CD4-positive, alpha-beta memory T cell (primary cell): ENCODE measurements at regions of chr15 and their contacts with region 1.

Region 1: GRCh38 chr15:75647370-75648155 is at the start of gene SNX33:
- DNase-seq: peak; percentile 43 to 82 (median 49)
- H3K4me3 ChIP-seq: peak within 1 kb of the TSS; percentile 64 to 73
- H3K4me3 Mint-ChIP-seq: peak within 1 kb of the TSS; percentile 86 to 91 (median 89)
- H3K27ac ChIP-seq: peak within 1 kb of the TSS; percentile 45
- H3K27ac Mint-ChIP-seq: peak within 1 kb of the TSS; percentile 66 to 91 (median 86)
- H3K4me1 ChIP-seq: peaks cover 32% of the 10 kb centered on the region
- H3K4me1 Mint-ChIP-seq: peaks cover 20 to 53% (median 37%) of the 10 kb centered on the region in 4 donors
- H3K27me3 ChIP-seq: no peaks in the 10 kb centered on the region
- H3K27me3 Mint-ChIP-seq: no peaks in the 10 kb centered on the region
- total RNA-seq, gene SNX33: 3.5 to 3.8 TPM

Region 2: DNA sequence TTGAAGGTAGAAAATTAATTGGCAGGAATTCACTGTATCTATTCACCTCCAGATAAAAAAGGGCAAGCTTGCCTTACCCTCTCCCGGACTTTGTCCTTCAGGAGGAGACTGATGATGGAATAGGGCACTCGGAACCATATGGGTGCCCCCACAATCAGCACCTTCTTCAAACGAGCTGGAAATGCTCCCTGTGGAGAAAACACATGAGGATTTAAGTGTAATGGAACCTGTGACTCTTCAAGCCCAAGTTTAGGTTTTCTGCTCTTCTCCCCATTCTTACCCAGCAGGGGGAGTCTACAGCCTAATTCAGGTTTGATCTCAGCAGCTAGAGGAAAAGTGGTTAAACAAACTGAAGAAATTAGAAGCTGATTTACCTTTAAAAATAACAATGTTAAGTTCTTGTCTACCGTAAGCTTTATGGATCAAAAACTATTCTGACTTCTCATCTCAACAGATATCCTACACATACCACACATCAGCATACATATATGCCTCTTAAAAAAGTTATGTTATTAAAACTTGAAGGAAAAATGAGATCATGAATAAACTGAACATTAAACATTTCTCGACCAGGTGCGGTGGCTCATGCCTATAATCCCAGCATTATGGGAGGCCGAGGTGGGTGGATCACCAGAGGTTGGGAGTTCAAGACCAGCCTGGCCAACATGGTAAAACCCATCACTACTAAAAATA is 138.6 kb before region 1 on chr15:
- CTCF ChIA-PET with region 1: interaction called, 41 read pairs
- POLR2A ChIA-PET with region 1: interaction called, 20 read pairs
- intact Hi-C with region 1: loop called (anchors 2 kb)
- DNase-seq: peak in 4 of 5 donors; percentile 40 to 49 (median 44)
- H3K4me3 ChIP-seq: no peak overlapping the region
- H3K4me3 Mint-ChIP-seq: no peak overlapping the region
- H3K27ac ChIP-seq: no peak overlapping the region
- H3K27ac Mint-ChIP-seq: peak overlapping the region in 2 of 7 donors; percentile 50 to 78
- H3K4me1 ChIP-seq: no peaks in the 10 kb centered on the region
- H3K4me1 Mint-ChIP-seq: peaks cover 0 to 3% (median 0%) of the 10 kb centered on the region in 4 donors
- H3K27me3 ChIP-seq: no peaks in the 10 kb centered on the region
- H3K27me3 Mint-ChIP-seq: no peaks in the 10 kb centered on the region

Region 3: GRCh38 chr15:75606711-75607699 is 40.6 kb before region 1 on chr15:
- CTCF ChIA-PET with region 1: interaction called, 3 read pairs
- POLR2A ChIA-PET with region 1: interaction called, 56 read pairs
- intact Hi-C with region 1: no loop called
- DNase-seq: peak; percentile 43 to 57 (median 52)
- H3K4me3 ChIP-seq: peak overlapping the region; percentile 5 to 40
- H3K4me3 Mint-ChIP-seq: peak overlapping the region; percentile 71 to 82 (median 78)
- H3K27ac ChIP-seq: peak overlapping the region; percentile 39
- H3K27ac Mint-ChIP-seq: peak overlapping the region; percentile 78 to 94 (median 91)
- H3K4me1 ChIP-seq: peaks cover 47% of the 10 kb centered on the region
- H3K4me1 Mint-ChIP-seq: peaks cover 34 to 56% (median 46%) of the 10 kb centered on the region in 4 donors
- H3K27me3 ChIP-seq: no peaks in the 10 kb centered on the region
- H3K27me3 Mint-ChIP-seq: no peaks in the 10 kb centered on the region